Adrenal gland (tissue), 19 donors: ENCODE measurements at regions of chr11 and their contacts with region 1.

Region 1: DNA sequence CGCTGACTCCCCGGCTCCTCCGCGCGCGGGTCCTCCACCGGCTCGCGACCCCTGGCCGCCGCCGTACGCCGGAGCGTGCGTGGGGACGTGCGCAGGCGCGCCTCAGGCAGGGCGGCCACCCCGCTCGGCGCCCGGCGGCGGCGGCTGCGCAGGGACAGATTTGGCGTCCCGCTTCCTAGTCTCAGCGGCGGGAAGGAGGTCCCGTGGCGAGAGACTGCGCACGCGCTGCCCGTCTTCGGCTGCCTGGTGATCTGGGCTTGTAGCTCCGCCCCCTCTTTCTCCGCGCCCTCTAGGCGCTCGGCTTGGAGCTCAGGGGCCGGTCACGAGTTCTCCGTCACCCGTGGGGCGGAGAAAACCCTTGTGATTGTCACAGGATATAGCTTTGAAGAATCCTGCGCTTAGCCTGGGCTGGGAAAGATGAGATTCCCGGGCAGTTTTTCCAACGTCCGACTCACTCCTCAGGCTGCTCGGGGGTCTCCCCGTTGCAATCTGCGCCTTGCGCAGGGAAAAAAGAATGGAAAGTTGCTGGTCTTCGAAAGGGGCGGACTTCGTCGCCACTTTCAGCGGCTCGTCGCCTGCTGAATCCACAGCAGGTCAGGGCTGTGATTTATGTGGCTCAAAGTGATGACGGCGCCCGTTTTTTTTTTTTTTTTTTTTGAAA is at the start of gene PATL1:
- DNase-seq: peak; percentile 99 to 100 (median 100)
- H3K4me3 ChIP-seq: peak within 1 kb of the TSS; percentile 68 to 98 (median 88)
- H3K27ac ChIP-seq: peak within 1 kb of the TSS; percentile 92 to 99 (median 98)
- H3K4me1 ChIP-seq: peaks cover 23 to 31% of the 10 kb centered on the region in 2 donors
- H3K27me3 ChIP-seq: no peaks in the 10 kb centered on the region
- CTCF ChIP-seq: no peak
- POLR2A ChIP-seq: peak; percentile 74 to 95
- total RNA-seq, gene PATL1: 10.3 to 41.7 (median 20.8) TPM

Region 2: DNA sequence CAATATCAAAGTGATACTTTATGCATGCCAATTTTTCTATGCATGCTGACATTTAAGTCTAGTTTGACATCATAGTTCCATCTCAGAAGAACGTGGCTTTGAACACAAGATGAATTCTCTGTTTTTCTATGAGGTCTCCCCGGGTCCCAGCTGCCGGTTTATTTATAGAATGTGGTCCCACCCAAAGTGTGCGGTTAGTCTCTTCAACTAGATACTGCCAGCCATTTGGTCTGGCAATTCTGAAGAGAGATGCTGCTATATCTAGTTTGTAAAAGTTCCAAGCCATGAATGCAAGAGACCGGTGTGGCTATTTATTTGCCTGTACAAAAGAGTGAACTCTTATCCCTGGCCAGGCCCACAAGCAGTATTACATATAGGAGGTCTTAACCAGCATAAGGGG is 252.1 kb before region 1 on chr11:
- intact Hi-C with region 1: no loop called
- DNase-seq: no peak
- H3K4me3 ChIP-seq: no peak overlapping the region
- H3K27ac ChIP-seq: no peak overlapping the region
- H3K4me1 ChIP-seq: no peaks in the 10 kb centered on the region
- H3K27me3 ChIP-seq: no peaks in the 10 kb centered on the region
- CTCF ChIP-seq: no peak
- POLR2A ChIP-seq: no peak

Region 3: DNA sequence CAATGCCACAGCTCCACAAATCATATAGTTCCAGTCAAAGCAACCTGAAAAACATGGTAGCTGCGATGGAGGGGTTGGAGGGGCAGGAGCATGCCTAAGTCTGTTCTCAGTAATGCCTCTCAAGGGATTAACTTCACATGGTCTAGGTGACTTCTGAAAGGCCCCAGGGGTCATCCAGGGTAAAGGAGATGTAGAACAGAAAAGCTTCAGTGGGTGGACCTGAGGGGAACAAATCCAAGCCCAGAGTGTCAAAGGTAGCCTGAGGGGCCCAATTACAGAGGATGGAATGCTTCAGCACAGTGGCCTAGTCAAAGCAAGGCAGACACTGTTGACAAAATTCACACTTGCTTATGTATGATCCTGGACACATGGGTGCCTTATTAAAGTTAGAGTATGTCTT is 134.4 kb before region 1 on chr11:
- intact Hi-C with region 1: loop called in 1 of 2 experiments (anchors 10 kb)
- DNase-seq: no peak
- H3K4me3 ChIP-seq: no peak overlapping the region
- H3K27ac ChIP-seq: no peak overlapping the region
- H3K4me1 ChIP-seq: peaks cover 7 to 12% of the 10 kb centered on the region in 2 donors
- H3K27me3 ChIP-seq: no peaks in the 10 kb centered on the region
- CTCF ChIP-seq: no peak
- POLR2A ChIP-seq: no peak

Region 4: DNA sequence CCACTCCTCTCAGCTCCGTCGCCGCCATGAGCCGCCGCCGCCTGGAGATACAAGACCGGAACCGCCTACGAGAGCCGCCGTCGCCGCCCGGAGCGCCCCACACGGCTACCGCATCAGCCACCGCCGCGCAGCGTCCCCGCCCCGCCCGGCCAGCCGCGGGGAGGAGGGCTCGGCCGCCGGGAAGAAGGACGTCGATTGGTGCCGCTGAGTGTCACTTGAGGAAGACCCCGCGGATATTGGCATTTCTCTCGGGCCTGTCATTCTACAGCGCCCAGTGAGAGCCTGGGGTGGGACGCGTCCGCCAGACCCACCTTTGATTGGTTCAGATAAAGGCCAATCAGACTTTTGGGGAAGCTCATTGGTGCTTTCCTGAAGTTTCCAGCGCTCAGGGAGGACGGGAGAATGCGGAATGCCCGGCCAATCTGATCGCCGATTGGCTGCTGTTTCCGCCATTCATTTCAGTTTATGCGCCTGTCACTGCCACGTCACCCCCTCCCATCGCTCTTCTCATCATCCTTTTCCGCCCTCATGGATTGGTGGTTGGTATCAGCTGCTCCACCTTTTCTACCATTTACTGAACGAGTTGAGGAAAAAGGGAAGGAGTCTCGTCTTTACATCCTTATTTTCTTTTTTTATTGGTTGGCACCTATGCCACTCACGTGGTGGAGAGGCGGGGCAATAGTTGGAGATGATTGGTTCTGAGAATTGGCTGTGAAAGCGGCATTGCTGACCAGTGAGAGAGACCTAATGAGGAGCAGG is 53.3 kb before region 1 on chr11 and contains the start of gene OSBP:
- intact Hi-C with region 1: loop called in 1 of 2 experiments (anchors 5 kb)
- DNase-seq: peak; percentile 99 to 100 (median 100)
- H3K4me3 ChIP-seq: peak within 1 kb of the TSS; percentile 43 to 83 (median 72)
- H3K27ac ChIP-seq: peak within 1 kb of the TSS; percentile 60 to 97 (median 91)
- H3K4me1 ChIP-seq: peaks cover 17 to 40% of the 10 kb centered on the region in 2 donors
- H3K27me3 ChIP-seq: no peaks in the 10 kb centered on the region
- CTCF ChIP-seq: no peak
- POLR2A ChIP-seq: peak; percentile 84 to 94
- total RNA-seq, gene OSBP: 44.0 to 117 (median 85.4) TPM

Region 5: DNA sequence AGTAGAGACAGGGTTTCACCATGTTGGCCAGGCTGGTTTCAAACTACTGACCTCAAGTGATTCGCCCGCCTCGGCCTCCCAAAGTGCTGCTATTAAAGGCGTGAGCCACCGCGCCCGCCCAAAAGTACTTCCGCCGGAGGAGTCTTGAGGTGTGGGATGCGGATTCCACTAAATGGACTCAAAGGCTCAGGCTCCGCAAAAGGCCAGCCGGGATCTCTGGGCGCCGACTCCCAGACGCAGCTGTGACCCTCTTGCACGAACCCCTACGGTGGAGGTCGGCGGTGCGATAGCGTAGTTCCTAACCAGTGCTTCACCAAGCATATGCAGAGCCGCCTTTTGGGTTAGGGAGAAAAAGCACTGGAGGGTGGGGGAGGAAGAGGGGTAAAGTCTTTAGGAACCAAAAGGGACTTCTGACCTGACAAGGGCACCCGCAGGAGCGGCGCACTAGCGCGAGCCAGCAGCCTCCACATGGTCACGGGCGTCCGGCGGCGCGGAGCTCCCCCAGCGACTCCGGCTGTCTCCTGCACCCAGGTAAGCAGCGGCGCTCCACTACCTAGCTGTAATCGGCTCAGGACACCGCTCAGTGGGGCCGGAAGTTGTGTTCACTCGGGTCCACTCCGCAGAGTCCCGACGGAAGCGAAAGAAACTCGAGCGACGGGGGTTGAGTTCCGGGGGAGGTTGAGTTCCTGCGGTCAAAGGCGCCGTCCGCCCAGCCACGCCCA is 141.3 kb after region 1 on chr11 and contains the start of gene MRPL16:
- intact Hi-C with region 1: loop called in 1 of 2 experiments (anchors 10 kb)
- DNase-seq: peak; percentile 83 to 95 (median 89)
- H3K4me3 ChIP-seq: peak within 1 kb of the TSS in 3 of 4 donors; percentile 81 to 92 (median 82)
- H3K27ac ChIP-seq: peak within 1 kb of the TSS in 4 of 5 donors; percentile 70 to 87 (median 76)
- H3K4me1 ChIP-seq: peaks cover 4 to 12% of the 10 kb centered on the region in 2 donors
- H3K27me3 ChIP-seq: no peaks in the 10 kb centered on the region
- CTCF ChIP-seq: peak in 3 of 6 experiments; percentile 12 to 33 (median 16)
- POLR2A ChIP-seq: peak in 1 of 2 donors; percentile 62
- total RNA-seq, gene MRPL16: 47.5 to 101 (median 73.8) TPM